GM10248 (cell line): ENCODE measurements at regions of chr5 and their contacts with region 1.

Region 1: GRCh38 chr5:132094393-132095076 is 20.9 kb downstream of the CSF2 start:
- DNase-seq: no peak
- CTCF ChIP-seq: no peak

Region 2: GRCh38 chr5:132073231-132074013 is 21.1 kb before region 1 on chr5 and contains the start of gene CSF2:
- CTCF ChIA-PET with region 1: interaction called, 105 read pairs
- POLR2A ChIA-PET with region 1: no interaction called
- DNase-seq: no peak
- CTCF ChIP-seq: no peak

Region 3: DNA sequence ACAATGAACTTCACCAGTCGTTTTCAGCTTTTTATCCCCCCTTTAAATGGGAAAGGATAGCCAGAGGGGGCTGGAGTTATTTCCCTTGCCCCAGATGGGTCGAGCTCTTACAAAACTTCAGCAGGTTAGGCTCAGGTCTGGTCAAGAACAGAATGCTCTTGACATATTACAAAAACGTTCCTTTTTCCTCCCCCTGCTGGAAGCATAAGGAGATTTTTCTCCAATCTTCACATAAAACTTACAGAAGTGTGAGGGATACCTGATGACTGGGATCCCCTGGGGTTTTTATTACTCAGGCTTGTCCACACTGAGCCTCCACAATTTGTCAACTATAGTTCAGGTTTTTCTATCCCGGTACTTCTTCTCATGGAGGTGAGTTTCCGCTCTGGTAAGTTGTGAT is 39.8 kb after region 1 on chr5:
- CTCF ChIA-PET with region 1: no interaction called
- POLR2A ChIA-PET with region 1: no interaction called
- DNase-seq: no peak
- CTCF ChIP-seq: peak; percentile 5